SK-N-SH (cell line): ENCODE measurements at regions of chr10 and their contacts with region 1.

Region 1: GRCh38 chr10:35195361-35196306 is 69.0 kb downstream of the CREM start:
- DNase-seq: peak; percentile 70
- H3K4me3 ChIP-seq: peak overlapping the region; percentile 53 to 62
- H3K27ac ChIP-seq: peak overlapping the region; percentile 92 to 96
- H3K4me1 ChIP-seq: peaks cover 0 to 3% of the 10 kb centered on the region in 2 experiments; a peak in 3 of 4 replicates
- H3K27me3 ChIP-seq: no peaks in the 10 kb centered on the region
- CTCF ChIP-seq: peak; percentile 83
- EP300 ChIP-seq: peak in 1 of 2 experiments; percentile 19; a peak in 2 of 4 replicates
- RAD21 ChIP-seq: peak; percentile 72

Region 2: GRCh38 chr10:34776090-34776690 is 419.4 kb before region 1 on chr10:
- CTCF ChIA-PET with region 1: no interaction called
- POLR2A ChIA-PET with region 1: no interaction called
- DNase-seq: no peak
- H3K4me3 ChIP-seq: no peak overlapping the region
- H3K27ac ChIP-seq: no peak overlapping the region
- H3K4me1 ChIP-seq: peaks cover 6 to 8% of the 10 kb centered on the region in 2 experiments; a peak in 3 of 4 replicates
- H3K27me3 ChIP-seq: no peaks in the 10 kb centered on the region
- CTCF ChIP-seq: no peak
- EP300 ChIP-seq: no peak
- RAD21 ChIP-seq: no peak

Region 3: GRCh38 chr10:35112571-35112970 is 83.1 kb before region 1 on chr10:
- CTCF ChIA-PET with region 1: interaction called, 10 read pairs
- POLR2A ChIA-PET with region 1: no interaction called
- DNase-seq: no peak
- H3K4me3 ChIP-seq: no peak overlapping the region
- H3K27ac ChIP-seq: no peak overlapping the region
- H3K4me1 ChIP-seq: no peaks in the 10 kb centered on the region
- H3K27me3 ChIP-seq: no peaks in the 10 kb centered on the region
- CTCF ChIP-seq: no peak
- EP300 ChIP-seq: no peak
- RAD21 ChIP-seq: no peak

Region 4: DNA sequence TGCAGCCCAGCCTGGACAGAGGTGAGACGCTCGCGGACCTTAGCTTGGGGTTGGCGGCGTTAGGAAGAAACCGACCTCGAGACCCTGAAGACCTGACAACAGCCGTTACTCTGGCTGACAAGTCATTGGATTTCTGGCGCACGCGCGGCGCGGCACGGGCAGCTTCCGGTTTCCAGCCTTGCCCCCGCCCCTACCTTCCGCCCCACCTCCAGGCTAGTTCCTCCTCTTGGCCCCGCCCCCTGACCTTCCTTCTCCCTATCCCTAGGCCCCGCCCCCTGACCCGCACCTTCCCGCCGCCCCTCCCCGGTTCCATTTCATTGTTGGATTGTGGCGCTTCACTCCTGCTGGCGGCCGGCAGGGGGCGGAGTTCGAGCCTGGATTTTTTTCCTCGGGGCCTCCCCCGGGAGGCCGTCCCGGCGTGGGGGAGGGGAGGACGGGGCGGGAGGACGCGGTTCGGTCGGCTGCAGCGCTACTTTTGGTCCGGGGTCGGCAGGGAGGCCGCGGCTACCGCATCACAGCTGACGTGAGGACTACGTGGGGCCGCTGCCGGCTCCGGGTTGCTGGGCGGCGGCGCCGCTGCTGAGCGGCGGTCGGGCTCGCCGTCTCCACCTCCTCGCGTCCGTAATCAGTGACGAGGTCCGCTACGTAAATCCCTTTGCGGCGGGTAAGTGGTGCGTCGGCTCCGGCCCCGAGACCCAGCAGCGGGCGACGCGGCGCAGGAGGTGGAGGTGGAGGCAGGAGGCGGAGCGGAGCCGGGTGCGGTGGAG is 68.9 kb before region 1 on chr10 and contains the start of gene CREM:
- CTCF ChIA-PET with region 1: interaction called, 31 read pairs
- POLR2A ChIA-PET with region 1: interaction called, 34 read pairs
- DNase-seq: peak; percentile 97
- H3K4me3 ChIP-seq: peak within 1 kb of the TSS; percentile 80 to 95
- H3K27ac ChIP-seq: peak within 1 kb of the TSS; percentile 94 to 99
- H3K4me1 ChIP-seq: peaks cover 0 to 24% of the 10 kb centered on the region in 2 experiments; a peak in 3 of 4 replicates
- H3K27me3 ChIP-seq: no peaks in the 10 kb centered on the region
- CTCF ChIP-seq: peak; percentile 76
- EP300 ChIP-seq: no peak
- RAD21 ChIP-seq: peak; percentile 56
- polyA plus RNA-seq, gene CREM: 41.4 TPM in 2 replicates

Region 5: GRCh38 chr10:35185260-35186034 is 10.2 kb before region 1 on chr10:
- CTCF ChIA-PET with region 1: interaction called, 13 read pairs
- POLR2A ChIA-PET with region 1: interaction called, 4 read pairs
- DNase-seq: no peak
- H3K4me3 ChIP-seq: no peak overlapping the region
- H3K27ac ChIP-seq: no peak overlapping the region
- H3K4me1 ChIP-seq: no peaks in the 10 kb centered on the region
- H3K27me3 ChIP-seq: no peaks in the 10 kb centered on the region
- CTCF ChIP-seq: no peak
- EP300 ChIP-seq: no peak
- RAD21 ChIP-seq: no peak

Region 6: DNA sequence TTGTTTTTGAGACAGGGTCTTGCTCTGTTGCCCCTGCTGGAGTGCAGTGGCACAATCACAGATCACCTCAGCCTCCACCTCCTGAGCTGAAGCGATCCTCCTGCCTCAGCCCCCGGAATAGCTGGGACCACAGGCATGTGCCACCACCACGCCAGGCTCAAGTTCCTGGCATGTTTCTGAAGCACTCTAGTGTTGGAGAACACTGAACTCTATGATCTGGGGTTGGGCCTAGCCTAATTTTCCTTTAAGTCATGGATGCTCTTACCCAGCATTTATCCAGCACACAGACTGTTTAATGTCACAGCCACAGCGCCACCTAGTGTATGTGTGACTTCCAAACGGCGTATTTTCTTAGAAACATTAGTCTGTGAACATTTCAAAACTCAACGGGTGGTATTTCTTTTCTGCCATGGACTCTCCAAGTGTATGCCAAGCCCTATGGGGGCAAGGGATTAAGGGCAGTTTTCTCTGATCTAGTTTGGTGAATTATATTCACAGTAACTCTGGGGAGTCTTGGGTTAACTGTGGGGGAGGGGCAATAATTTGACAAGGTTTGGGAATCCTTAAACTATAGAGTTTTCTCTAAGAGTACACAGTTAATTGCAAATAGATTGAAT is 22.8 kb after region 1 on chr10:
- CTCF ChIA-PET with region 1: interaction called, 29 read pairs
- POLR2A ChIA-PET with region 1: no interaction called
- DNase-seq: peak; percentile 69
- H3K4me3 ChIP-seq: no peak overlapping the region; a peak in 1 of 4 replicates
- H3K27ac ChIP-seq: no peak overlapping the region
- H3K4me1 ChIP-seq: peaks cover 0 to 2% of the 10 kb centered on the region in 2 experiments; a peak in 3 of 4 replicates
- H3K27me3 ChIP-seq: no peaks in the 10 kb centered on the region
- CTCF ChIP-seq: peak; percentile 89
- EP300 ChIP-seq: no peak
- RAD21 ChIP-seq: peak; percentile 87